GM10248 (cell line): ENCODE measurements at regions of chr14 and their contacts with region 1.

Region 1: GRCh38 chr14:73503648-73504047 is 12.9 kb downstream of the RIOX1 start:
- DNase-seq: no peak
- CTCF ChIP-seq: no peak

Region 2: GRCh38 chr14:73344319-73344718 is 159.3 kb before region 1 on chr14:
- CTCF ChIA-PET with region 1: no interaction called
- POLR2A ChIA-PET with region 1: no interaction called
- DNase-seq: no peak
- CTCF ChIP-seq: no peak

Region 3: GRCh38 chr14:73526569-73526968 is 22.9 kb after region 1 on chr14:
- CTCF ChIA-PET with region 1: interaction called, 30 read pairs
- POLR2A ChIA-PET with region 1: no interaction called
- DNase-seq: no peak
- CTCF ChIP-seq: no peak

Region 4: GRCh38 chr14:73568381-73568781 is 64.7 kb after region 1 on chr14:
- CTCF ChIA-PET with region 1: interaction called, 38 read pairs
- POLR2A ChIA-PET with region 1: interaction called, 7 read pairs
- DNase-seq: no peak
- CTCF ChIP-seq: no peak

Region 5: GRCh38 chr14:73997108-73997943 is 493.7 kb after region 1 on chr14:
- CTCF ChIA-PET with region 1: no interaction called
- POLR2A ChIA-PET with region 1: interaction called, 10 read pairs
- DNase-seq: no peak
- CTCF ChIP-seq: no peak